Right ventricle myocardium superior (tissue), 1 donor: ENCODE measurements at regions of chr4 and their contacts with region 1.

Region 1: GRCh38 chr4:123661080-123661737 is 264.6 kb downstream of the SPRY1 start:
- DNase-seq: no peak
- ATAC-seq: no peak

Region 2: GRCh38 chr4:123096038-123096437 is 565.2 kb before region 1 on chr4:
- intact Hi-C with region 1: loop called (anchors 10 kb)
- DNase-seq: no peak
- ATAC-seq: no peak